Activated naive CD8-positive, alpha-beta T cell treated with anti-CD3 and anti-CD28 coated beads, Interleukin-2, amount 10 ng/mL, durations not matched to agents 7 days and 5 days (primary cell): ENCODE measurements at regions of chr6 and their contacts with region 1.

Region 1: GRCh38 chr6:127951172-127951917 is 50.5 kb upstream of the THEMIS start:
- DNase-seq: no peak
- ATAC-seq: peak; percentile 69
- H3K4me3 Mint-ChIP-seq: peak overlapping the region; percentile 67
- H3K27ac Mint-ChIP-seq: peak overlapping the region; percentile 95
- H3K4me1 Mint-ChIP-seq: peaks cover 61% of the 10 kb centered on the region
- H3K27me3 Mint-ChIP-seq: no peaks in the 10 kb centered on the region

Region 2: GRCh38 chr6:127933852-127934840 is 17.2 kb before region 1 on chr6:
- POLR2A ChIA-PET with region 1: interaction called, 30 read pairs
- DNase-seq: no peak
- ATAC-seq: peak; percentile 95
- H3K4me3 Mint-ChIP-seq: peak overlapping the region; percentile 73
- H3K27ac Mint-ChIP-seq: peak overlapping the region; percentile 93
- H3K4me1 Mint-ChIP-seq: peaks cover 47% of the 10 kb centered on the region
- H3K27me3 Mint-ChIP-seq: no peaks in the 10 kb centered on the region

Region 3: DNA sequence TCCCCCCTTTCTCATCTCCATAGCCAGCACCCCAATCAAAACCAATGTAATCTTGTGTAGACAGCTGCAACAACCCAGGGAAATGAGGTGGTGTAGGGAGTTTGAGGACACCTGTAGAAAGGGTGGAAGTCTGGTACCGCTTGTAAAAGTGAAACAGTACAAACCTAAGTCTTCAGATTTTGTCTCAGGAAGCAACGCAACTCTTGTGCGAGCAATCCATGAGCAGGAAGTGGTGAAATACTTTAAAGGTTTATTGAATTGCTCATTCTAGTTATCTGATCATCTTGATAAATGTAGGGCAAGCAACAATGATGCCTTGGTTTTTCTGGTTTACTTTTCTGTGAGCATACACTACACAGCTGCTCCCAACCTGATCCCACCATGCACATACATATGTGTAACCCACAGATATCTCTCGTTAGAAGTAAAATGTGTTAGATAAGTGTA is 20.6 kb after region 1 on chr6:
- POLR2A ChIA-PET with region 1: interaction called, 51 read pairs
- DNase-seq: no peak
- ATAC-seq: peak; percentile 71
- H3K4me3 Mint-ChIP-seq: peak overlapping the region; percentile 88
- H3K27ac Mint-ChIP-seq: peak overlapping the region; percentile 97
- H3K4me1 Mint-ChIP-seq: peaks cover 61% of the 10 kb centered on the region
- H3K27me3 Mint-ChIP-seq: no peaks in the 10 kb centered on the region

Region 4: GRCh38 chr6:127980996-127981395 is 29.7 kb after region 1 on chr6:
- POLR2A ChIA-PET with region 1: interaction called, 14 read pairs
- DNase-seq: no peak
- ATAC-seq: no peak
- H3K4me3 Mint-ChIP-seq: peak overlapping the region; percentile 79
- H3K27ac Mint-ChIP-seq: peak overlapping the region; percentile 66
- H3K4me1 Mint-ChIP-seq: peaks cover 67% of the 10 kb centered on the region
- H3K27me3 Mint-ChIP-seq: no peaks in the 10 kb centered on the region